GM10248 (cell line): ENCODE measurements at regions of chr22 and their contacts with region 1.

Region 1: GRCh38 chr22:19970479-19971275 is 29.1 kb upstream of the TXNRD2 start:
- DNase-seq: peak; percentile 88
- CTCF ChIP-seq: peak; percentile 95

Region 2: GRCh38 chr22:19937616-19938473 is 32.8 kb before region 1 on chr22:
- CTCF ChIA-PET with region 1: no interaction called
- POLR2A ChIA-PET with region 1: no interaction called
- DNase-seq: no peak
- CTCF ChIP-seq: no peak

Region 3: DNA sequence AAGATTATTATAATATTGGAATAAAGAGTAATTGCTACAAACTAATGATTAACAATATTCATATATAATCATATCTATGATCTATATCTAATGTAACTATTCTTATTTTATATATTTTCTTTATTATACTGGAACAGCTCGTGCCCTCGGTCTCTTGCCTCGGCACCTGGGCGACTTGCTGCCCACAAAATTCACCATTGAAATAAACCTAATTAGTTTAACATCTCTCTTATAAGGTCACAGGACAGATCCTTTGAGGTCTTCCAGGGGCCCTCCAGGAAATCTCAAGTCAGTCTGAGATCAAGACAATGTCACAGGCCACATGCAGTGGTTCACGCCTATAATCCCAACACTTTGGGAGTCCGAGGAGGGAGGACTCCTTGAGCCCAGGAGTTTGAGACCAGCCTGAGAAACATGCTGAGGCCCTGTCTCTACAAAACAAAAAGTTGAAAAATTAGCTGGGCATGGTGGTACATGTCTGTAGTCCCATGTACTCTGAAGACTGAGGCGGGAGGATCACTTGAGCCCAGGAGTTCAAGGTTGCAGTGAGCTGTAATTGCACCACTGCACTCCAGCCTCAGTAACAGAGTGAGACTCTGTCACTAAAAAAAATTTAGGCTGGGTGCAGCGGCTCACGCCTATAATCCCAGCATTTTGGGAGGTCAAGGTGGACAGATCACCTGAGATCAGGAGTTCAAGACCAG is 22.5 kb before region 1 on chr22:
- CTCF ChIA-PET with region 1: interaction called, 13 read pairs
- POLR2A ChIA-PET with region 1: no interaction called
- DNase-seq: no peak
- CTCF ChIP-seq: no peak

Region 4: GRCh38 chr22:19984201-19984753 is 13.6 kb after region 1 on chr22:
- CTCF ChIA-PET with region 1: interaction called, 10 read pairs
- POLR2A ChIA-PET with region 1: no interaction called
- DNase-seq: no peak
- CTCF ChIP-seq: no peak

Region 5: DNA sequence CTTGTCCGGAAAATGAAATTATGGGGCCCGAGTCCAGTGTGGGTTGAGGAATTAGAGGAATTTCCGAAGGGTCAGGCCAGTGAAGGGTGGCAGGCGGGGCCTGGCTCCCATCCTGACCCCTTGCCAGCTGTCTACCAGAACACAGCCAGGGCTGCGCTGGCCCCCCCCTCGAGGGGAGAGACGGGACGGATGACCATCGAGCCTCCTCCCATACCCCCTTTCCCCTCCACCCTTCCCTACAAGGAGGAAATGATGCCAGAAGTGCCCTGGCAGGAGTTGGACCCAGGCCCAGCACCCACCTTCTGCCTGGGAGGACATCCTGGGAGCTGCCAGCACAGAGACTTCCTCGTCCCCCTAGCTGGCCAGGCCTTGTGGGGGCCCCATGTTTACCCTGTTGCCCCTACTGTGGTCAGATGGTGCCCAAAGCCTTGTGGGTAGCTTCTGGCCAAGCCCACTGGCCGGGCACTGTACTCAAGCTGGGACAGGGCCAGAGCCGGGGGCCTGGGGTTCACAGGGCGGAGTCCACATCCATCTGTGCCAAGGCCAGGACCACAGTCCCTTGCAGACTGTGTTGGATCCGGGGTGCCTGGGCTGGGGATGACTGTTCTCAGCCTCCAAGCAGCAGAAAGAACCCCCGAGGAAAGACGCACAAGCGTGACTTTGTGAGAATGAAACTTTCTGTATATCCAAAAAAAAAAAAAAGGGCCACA is 25.1 kb after region 1 on chr22:
- CTCF ChIA-PET with region 1: no interaction called
- POLR2A ChIA-PET with region 1: no interaction called
- DNase-seq: no peak
- CTCF ChIP-seq: no peak

Region 6: DNA sequence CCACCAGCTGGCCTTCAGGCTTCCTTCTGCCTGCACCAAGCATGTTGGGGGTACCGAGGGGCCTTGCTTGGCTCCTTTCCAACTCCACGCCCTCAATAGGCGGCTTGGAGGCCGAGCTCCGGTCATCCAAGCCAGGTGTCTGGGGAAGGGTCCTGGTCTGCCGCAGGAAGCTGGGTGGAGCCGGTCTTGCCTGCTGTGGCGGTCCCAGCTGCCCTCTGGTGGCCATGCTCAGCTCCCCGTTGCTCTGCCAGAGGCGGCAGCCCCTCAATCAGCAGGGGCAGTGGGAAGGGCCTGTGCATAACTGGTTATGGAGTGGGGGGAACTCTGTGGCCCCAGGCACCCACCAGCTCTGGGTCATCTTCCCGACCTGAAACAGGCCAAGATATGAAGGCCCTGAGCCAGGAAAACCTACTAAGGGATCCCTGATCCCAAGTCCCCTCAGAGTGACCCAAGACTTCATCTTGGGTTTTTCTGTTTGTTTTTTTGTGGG is 42.8 kb after region 1 on chr22:
- CTCF ChIA-PET with region 1: interaction called, 54 read pairs
- POLR2A ChIA-PET with region 1: no interaction called
- DNase-seq: peak; percentile 70
- CTCF ChIP-seq: peak; percentile 77

Region 7: DNA sequence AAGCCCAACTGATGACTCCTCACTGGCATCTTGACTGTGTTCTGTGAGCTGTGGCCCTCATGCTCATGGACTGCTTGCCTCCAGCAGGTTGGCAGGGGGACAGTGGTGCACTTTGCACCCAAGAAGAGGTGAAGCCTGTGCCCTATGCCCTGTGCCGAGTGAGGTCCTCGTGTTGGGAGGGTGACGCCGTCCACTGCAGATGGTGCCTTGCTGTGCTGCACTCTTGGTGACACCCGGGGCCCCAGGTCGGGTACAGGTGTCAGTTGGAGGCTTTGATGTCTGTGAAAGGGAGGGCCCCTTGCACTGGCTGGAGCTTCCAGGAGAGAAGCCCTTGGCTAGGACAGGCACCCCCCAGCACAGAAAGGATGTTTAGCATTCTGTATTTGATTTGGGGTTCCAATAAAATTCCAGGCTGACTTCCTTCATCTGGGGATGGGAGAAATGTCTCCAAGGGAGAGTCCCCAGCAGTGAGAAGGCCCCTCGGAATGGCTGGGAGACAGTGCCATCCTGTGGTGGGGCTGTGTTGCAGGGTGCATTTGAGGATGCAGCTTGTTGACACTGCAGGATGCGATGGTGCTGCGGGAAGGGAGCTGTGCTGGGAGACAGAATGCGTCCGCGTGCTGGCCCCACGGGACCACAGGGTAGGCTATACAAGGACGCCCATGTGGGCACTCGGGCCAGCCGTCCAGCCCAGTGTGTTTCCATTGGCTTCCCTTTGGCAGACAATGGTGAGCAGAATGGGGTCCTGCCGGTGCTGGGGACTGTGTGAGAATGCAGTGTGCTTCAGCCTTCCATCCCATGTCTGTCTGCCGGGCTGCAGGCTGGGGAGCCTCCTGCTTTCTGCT is 158.4 kb after region 1 on chr22:
- CTCF ChIA-PET with region 1: interaction called, 19 read pairs
- POLR2A ChIA-PET with region 1: no interaction called
- DNase-seq: no peak
- CTCF ChIP-seq: peak; percentile 43